ENCODE measurements at regions of chr17 and their contacts with region 1.

Region 1: GRCh38 chr17:40303009-40303657 is 5.8 kb upstream of the RARA start:
- DNase-seq: peak; percentile 86
- ATAC-seq: peak; percentile 81
- H3K4me3 ChIP-seq: no peak overlapping the region
- H3K4me3 Mint-ChIP-seq: no peak overlapping the region
- H3K27ac ChIP-seq: no peak overlapping the region
- H3K27ac Mint-ChIP-seq: no peak overlapping the region
- H3K4me1 ChIP-seq: peaks cover 5 to 6% of the 10 kb centered on the region in 2 donors
- H3K4me1 Mint-ChIP-seq: peaks cover 7% of the 10 kb centered on the region
- H3K27me3 ChIP-seq: no peaks in the 10 kb centered on the region
- H3K27me3 Mint-ChIP-seq: no peaks in the 10 kb centered on the region
- CTCF ChIP-seq: peak; percentile 83

Region 2: GRCh38 chr17:40317880-40318829 is 15.0 kb after region 1 on chr17:
- CTCF ChIA-PET with region 1: interaction called, 119 read pairs
- POLR2A ChIA-PET with region 1: interaction called, 3 read pairs
- intact Hi-C with region 1: loop called (anchors 1 kb)
- DNase-seq: peak; percentile 95
- ATAC-seq: peak; percentile 67
- H3K4me3 ChIP-seq: peak overlapping the region; percentile 87 to 100 (median 93)
- H3K4me3 Mint-ChIP-seq: peak overlapping the region; percentile 97
- H3K27ac ChIP-seq: peak overlapping the region; percentile 95 to 96
- H3K27ac Mint-ChIP-seq: peak overlapping the region; percentile 100
- H3K4me1 ChIP-seq: peaks cover 56 to 78% of the 10 kb centered on the region in 2 donors
- H3K4me1 Mint-ChIP-seq: peaks cover 80% of the 10 kb centered on the region
- H3K27me3 ChIP-seq: no peaks in the 10 kb centered on the region
- H3K27me3 Mint-ChIP-seq: no peaks in the 10 kb centered on the region
- CTCF ChIP-seq: no peak

Region 3: GRCh38 chr17:40331743-40332641 is 28.9 kb after region 1 on chr17:
- CTCF ChIA-PET with region 1: interaction called, 95 read pairs
- POLR2A ChIA-PET with region 1: interaction called, 4 read pairs
- intact Hi-C with region 1: no loop called
- DNase-seq: no peak
- ATAC-seq: no peak
- H3K4me3 ChIP-seq: no peak overlapping the region
- H3K4me3 Mint-ChIP-seq: peak overlapping the region; percentile 40
- H3K27ac ChIP-seq: no peak overlapping the region
- H3K27ac Mint-ChIP-seq: peak overlapping the region; percentile 50
- H3K4me1 ChIP-seq: peaks cover 67 to 86% of the 10 kb centered on the region in 2 donors
- H3K4me1 Mint-ChIP-seq: peaks cover 72% of the 10 kb centered on the region
- H3K27me3 ChIP-seq: no peaks in the 10 kb centered on the region
- H3K27me3 Mint-ChIP-seq: no peaks in the 10 kb centered on the region
- CTCF ChIP-seq: no peak

Region 4: DNA sequence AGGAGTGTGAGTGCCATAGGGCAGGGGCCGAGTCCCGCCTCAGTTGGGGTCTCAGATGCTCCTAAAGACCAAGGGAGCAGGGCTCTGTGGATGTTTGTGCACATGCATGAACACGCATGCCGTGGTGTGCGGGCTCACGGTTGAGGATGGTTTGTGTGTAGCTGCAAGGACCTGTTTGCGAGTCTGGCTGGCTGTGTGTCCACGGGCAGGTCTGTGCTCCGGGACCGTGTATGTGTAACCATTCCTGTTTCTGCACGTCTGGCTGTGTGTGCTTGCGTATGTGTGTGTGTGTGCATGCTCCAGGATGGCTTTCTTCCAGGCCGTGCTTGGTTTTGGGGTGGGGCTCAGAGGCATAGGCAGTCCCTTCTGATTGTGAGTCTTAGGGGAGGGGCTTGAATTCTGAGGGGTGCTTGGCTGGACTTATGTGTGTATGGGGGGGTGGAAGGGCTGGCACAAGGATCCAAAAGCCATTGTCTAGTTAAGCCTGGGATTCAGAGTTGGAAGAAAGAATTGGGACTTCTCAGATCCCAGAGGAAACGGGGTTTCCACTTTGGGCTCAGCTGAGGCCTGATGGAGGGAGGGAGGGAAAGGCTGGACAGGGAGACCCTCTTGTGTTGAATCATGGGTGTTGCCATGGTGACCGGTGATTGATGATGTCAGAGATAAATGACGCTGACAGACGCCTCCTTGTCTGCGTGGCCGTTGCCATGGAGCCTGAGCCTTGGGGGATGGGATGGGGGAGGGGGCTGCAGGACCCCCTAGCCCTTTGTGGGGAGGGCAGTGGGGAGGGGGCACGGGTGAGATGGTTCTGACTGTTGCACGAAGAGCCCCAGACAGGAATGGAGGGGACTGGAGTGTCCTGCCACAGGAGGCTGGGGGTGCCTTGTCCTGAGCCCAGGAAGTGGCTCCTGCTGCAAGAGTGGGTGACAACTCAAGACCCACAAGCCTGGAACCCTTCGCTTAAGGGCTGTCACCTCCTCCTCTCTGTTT is 47.1 kb after region 1 on chr17:
- CTCF ChIA-PET with region 1: interaction called, 871 read pairs
- POLR2A ChIA-PET with region 1: interaction called, 13 read pairs
- intact Hi-C with region 1: loop called (anchors 1 kb)
- DNase-seq: peak; percentile 41
- ATAC-seq: no peak
- H3K4me3 ChIP-seq: no peak overlapping the region
- H3K4me3 Mint-ChIP-seq: no peak overlapping the region
- H3K27ac ChIP-seq: no peak overlapping the region
- H3K27ac Mint-ChIP-seq: peak overlapping the region; percentile 42
- H3K4me1 ChIP-seq: peaks cover 48 to 65% of the 10 kb centered on the region in 2 donors
- H3K4me1 Mint-ChIP-seq: peaks cover 74% of the 10 kb centered on the region
- H3K27me3 ChIP-seq: no peaks in the 10 kb centered on the region
- H3K27me3 Mint-ChIP-seq: no peaks in the 10 kb centered on the region
- CTCF ChIP-seq: no peak

Region 5: DNA sequence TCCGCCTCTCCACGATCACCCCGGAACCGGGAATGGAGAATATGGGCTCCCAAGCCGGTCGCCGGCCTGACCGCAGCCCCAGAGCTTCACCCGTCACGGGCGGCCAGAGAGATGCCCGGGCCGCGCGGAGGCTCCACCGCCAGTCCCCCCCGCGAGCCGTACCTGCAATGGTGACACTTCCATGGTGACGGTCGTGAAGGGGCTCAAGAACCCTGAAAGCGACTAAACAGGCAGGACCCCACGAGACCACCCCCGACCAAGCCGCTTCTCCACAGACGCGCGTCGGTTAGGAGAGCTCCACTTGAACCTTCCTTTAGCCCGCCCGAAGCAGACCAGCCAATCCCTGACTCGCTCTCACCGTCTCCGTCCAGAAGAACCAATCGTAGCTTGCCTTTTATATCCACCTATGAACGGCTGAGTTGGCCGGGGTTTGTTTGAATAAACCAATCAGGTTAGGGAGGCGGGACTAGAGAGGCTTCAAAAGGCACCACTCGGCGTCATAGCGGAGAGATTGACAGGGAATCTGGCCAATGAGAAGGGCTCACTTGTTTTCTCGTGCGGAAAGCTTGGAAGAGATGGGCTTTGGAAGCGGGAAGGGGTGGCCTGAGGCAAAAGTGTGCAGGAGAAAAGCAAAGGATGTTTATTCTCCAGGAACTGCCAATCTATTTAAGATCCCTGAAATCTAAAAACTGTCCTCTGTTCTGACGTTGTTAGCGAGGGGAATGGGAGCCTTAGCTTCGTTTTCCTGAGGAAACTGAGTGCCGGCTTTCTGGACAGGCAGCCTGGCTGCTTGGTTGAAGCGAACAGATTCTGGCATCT is 114.7 kb after region 1 on chr17 and contains the start of gene TOP2A:
- CTCF ChIA-PET with region 1: interaction called, 40 read pairs
- POLR2A ChIA-PET with region 1: interaction called, 4 read pairs
- intact Hi-C with region 1: loop called (anchors 2 kb)
- DNase-seq: peak; percentile 99
- ATAC-seq: peak; percentile 99
- H3K4me3 ChIP-seq: peak within 1 kb of the TSS; percentile 63 to 93 (median 84)
- H3K4me3 Mint-ChIP-seq: peak within 1 kb of the TSS; percentile 89
- H3K27ac ChIP-seq: peak within 1 kb of the TSS; percentile 63 to 72
- H3K27ac Mint-ChIP-seq: peak within 1 kb of the TSS; percentile 86
- H3K4me1 ChIP-seq: peaks cover 7 to 17% of the 10 kb centered on the region in 2 donors
- H3K4me1 Mint-ChIP-seq: peaks cover 15% of the 10 kb centered on the region
- H3K27me3 ChIP-seq: no peaks in the 10 kb centered on the region
- H3K27me3 Mint-ChIP-seq: no peaks in the 10 kb centered on the region
- CTCF ChIP-seq: no peak
- total RNA-seq, gene TOP2A: 3.0 and 3.1 TPM in 2 replicates

Measured in B cell (primary cell).